Activated T-helper 1 cell treated with anti-CD3 and anti-CD28 coated beads, Interleukin-12 subunit alpha, Interleukin-12 subunit beta, Interleukin-2, Interleukin-4 antibody, amounts not matched to agents 30 ng/mL and 10 ng/mL and 1 ng/mL, durations not matched to agents 14 hours and 24 hours and 36 hours (primary cell): ENCODE measurements at regions of chr19 and their contacts with region 1.

Region 1: GRCh38 chr19:53103198-53103944 is at the start of gene ZNF160:
- DNase-seq: peak; percentile 98
- H3K4me3 Mint-ChIP-seq: peak within 1 kb of the TSS; percentile 92
- H3K27ac Mint-ChIP-seq: peak within 1 kb of the TSS; percentile 95
- H3K4me1 Mint-ChIP-seq: peaks cover 23% of the 10 kb centered on the region
- H3K27me3 Mint-ChIP-seq: no peaks in the 10 kb centered on the region
- total RNA-seq, gene ZNF160: 26.0 and 27.8 TPM in 2 replicates

Region 2: GRCh38 chr19:52189735-52190486 is 913.5 kb before region 1 on chr19 and contains the start of gene PPP2R1A:
- intact Hi-C with region 1: loop called (anchors 5 kb)
- DNase-seq: peak; percentile 97
- H3K4me3 Mint-ChIP-seq: peak within 1 kb of the TSS; percentile 98
- H3K27ac Mint-ChIP-seq: peak within 1 kb of the TSS; percentile 99
- H3K4me1 Mint-ChIP-seq: peaks cover 45% of the 10 kb centered on the region
- H3K27me3 Mint-ChIP-seq: no peaks in the 10 kb centered on the region
- total RNA-seq, gene PPP2R1A: 214 and 215 TPM in 2 replicates

Region 3: GRCh38 chr19:52734893-52735661 is 368.3 kb before region 1 on chr19 and contains the start of gene ZNF611:
- intact Hi-C with region 1: loop called (anchors 1 kb)
- DNase-seq: peak; percentile 97
- H3K4me3 Mint-ChIP-seq: peak within 1 kb of the TSS; percentile 91
- H3K27ac Mint-ChIP-seq: peak within 1 kb of the TSS; percentile 92
- H3K4me1 Mint-ChIP-seq: peaks cover 27% of the 10 kb centered on the region
- H3K27me3 Mint-ChIP-seq: no peaks in the 10 kb centered on the region
- total RNA-seq, gene ZNF611: 17.0 and 21.0 TPM in 2 replicates

Region 4: DNA sequence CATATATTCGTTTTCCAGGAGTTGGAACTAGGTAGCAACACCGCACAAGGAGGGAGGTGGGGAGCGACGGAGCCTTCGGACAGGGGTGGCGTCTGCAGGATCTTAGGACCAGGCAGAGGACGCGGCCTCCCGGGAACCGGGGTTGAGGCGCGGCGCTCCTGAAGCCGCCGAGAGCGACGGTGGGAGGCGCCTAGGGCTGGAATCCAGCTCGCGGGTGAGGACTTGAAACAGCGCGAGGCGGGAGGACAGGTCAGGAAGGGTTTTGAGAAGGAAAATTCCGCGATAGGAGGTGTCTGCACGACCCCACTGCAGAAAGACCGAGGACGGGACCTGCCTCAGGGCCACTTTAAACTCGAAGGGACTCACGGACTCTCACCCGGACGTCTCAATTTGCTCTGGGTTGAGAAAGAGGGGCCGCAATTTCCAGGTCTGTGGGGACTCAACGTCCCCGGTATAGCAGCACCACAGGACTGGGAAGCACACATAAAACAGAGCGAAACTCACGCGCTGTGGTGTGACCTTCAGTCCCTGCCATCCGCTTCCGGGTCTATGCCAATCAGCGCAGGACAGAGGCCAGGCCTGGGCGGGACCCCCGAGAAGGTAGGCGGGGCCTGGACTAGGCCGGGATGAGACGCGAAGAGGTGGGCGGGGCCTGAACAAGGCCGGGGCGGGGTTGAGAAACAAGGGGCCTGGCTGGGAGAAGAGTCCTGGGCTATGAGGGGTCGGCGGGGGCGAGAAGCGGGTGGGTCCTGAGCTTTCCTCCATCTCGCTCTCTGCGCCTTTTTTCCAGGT is 206.0 kb before region 1 on chr19 and contains the start of gene ZNF320:
- intact Hi-C with region 1: loop called (anchors 1 kb)
- DNase-seq: peak; percentile 90
- H3K4me3 Mint-ChIP-seq: peak within 1 kb of the TSS; percentile 92
- H3K27ac Mint-ChIP-seq: peak within 1 kb of the TSS; percentile 87
- H3K4me1 Mint-ChIP-seq: peaks cover 4% of the 10 kb centered on the region
- H3K27me3 Mint-ChIP-seq: no peaks in the 10 kb centered on the region
- total RNA-seq, gene ZNF320: 10.5 and 11.0 TPM in 2 replicates

Region 5: GRCh38 chr19:52993323-52994178 is 109.8 kb before region 1 on chr19:
- intact Hi-C with region 1: loop called (anchors 1 kb)
- DNase-seq: peak; percentile 79
- H3K4me3 Mint-ChIP-seq: peak overlapping the region; percentile 82
- H3K27ac Mint-ChIP-seq: no peak overlapping the region
- H3K4me1 Mint-ChIP-seq: peaks cover 6% of the 10 kb centered on the region
- H3K27me3 Mint-ChIP-seq: peaks cover 4% of the 10 kb centered on the region

Region 6: GRCh38 chr19:53333463-53334449 is 230.4 kb after region 1 on chr19 and contains the start of gene ZNF845:
- intact Hi-C with region 1: loop called (anchors 1 kb)
- DNase-seq: peak; percentile 95
- H3K4me3 Mint-ChIP-seq: peak within 1 kb of the TSS; percentile 91
- H3K27ac Mint-ChIP-seq: peak within 1 kb of the TSS; percentile 80
- H3K4me1 Mint-ChIP-seq: peaks cover 10% of the 10 kb centered on the region
- H3K27me3 Mint-ChIP-seq: no peaks in the 10 kb centered on the region
- total RNA-seq, gene ZNF845: 6.5 and 6.7 TPM in 2 replicates

Region 7: DNA sequence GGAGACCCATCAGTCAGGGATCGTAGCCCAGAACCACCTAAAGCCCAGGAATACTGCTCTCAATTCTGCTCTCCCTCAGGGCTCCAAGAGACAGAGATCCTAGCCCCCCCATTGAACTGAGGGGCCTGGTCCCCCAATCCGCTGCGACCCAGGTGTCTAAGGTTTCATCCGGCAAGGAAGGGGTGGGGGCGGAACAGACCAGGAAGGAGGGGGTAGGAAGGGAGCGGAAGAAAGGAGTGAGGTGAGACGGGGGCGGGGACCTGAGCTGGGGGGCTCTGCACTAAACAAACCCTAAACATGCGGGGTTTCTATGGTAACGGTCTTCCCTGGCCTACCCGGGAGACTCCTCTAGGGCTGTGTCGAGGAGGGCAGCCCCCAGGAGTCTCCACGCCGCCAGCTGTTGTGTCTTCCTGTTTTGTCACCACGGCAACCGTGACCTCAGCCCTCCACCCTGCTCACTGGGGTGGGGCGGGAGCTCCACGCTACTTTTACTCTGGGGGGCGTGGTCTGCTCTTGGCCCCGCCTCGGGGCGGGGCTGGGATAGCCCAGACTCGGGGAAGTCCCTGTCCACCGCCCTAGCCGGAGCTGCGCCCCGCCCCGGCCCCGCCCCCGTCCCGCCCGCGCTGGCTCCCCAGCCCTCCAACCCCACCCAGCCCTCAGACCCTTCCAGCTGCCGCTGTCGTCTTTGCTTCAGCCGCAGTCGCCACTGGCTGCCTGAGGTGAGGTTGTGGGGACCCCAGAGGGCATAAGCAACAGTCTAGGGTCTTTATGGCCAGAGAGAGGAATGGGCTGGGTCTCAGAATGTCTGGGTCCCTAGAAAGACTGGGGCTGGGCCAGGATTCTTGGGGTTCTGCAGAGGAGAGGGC is 764.1 kb after region 1 on chr19 and contains the start of gene MYADM:
- intact Hi-C with region 1: loop called (anchors 5 kb)
- DNase-seq: peak; percentile 100
- H3K4me3 Mint-ChIP-seq: peak within 1 kb of the TSS; percentile 94
- H3K27ac Mint-ChIP-seq: peak within 1 kb of the TSS; percentile 96
- H3K4me1 Mint-ChIP-seq: peaks cover 37% of the 10 kb centered on the region
- H3K27me3 Mint-ChIP-seq: peaks cover 3% of the 10 kb centered on the region
- total RNA-seq, gene MYADM: 58.8 and 63.1 TPM in 2 replicates